ENCODE measurements at regions of chr5 and their contacts with region 1.

Region 1: GRCh38 chr5:116574367-116575325 is at the start of gene SEMA6A:
- DNase-seq: peak; percentile 92 to 93
- H3K4me3 ChIP-seq: peak within 1 kb of the TSS; percentile 61
- H3K4me3 Mint-ChIP-seq: peak within 1 kb of the TSS; percentile 92
- H3K27ac Mint-ChIP-seq: peak within 1 kb of the TSS; percentile 45
- H3K4me1 ChIP-seq: peaks cover 20% of the 10 kb centered on the region
- H3K4me1 Mint-ChIP-seq: peaks cover 21% of the 10 kb centered on the region
- H3K27me3 ChIP-seq: no peaks in the 10 kb centered on the region; the same call in 1 of the 2 replicates
- H3K27me3 Mint-ChIP-seq: peaks cover 2% of the 10 kb centered on the region
- CTCF ChIP-seq: no peak
- total RNA-seq, gene SEMA6A: 18.3 and 26.3 TPM in 2 replicates

Region 2: DNA sequence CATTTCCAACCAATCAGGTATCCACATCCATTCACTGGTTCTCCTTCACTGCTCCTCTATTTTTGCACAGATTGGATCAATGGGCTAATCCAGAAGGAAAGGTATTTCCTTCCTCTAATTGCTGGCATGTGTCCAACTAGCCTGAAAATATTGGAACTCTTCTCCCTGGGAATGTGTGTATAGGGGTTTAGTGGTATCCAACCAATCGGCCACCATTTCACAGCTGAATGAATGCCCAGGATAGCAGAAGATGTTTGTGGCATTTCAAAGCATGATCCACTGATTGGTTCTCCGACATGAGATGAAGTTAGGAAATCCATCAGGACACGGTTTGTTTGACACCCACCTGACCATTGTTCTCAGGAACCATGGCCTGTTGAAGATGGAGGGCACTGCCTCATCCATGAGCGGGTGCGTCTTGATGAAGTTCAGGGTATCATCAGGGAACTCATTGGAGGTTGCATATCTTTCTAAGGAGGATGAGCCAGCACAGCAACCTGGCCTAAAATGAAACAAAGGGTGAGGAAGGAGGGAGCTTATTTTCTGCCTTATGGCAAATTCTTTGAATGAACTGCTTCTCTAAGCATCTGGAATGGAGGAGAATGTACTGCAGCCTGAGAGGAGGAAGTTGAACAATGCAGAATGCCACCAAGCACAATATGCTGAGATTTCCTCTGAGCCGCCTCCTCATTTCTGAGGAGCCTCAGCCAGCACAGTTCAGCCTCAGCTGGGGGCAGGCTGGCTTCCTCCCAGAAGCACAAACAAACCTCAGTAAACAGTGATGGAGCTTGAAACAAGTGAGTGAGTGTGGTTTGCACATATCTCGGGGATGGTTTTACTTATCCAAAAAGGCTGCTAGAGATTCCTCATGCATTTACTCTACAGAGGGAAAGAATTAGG is 94.6 kb before region 1 on chr5:
- CTCF ChIA-PET with region 1: no interaction called
- POLR2A ChIA-PET with region 1: no interaction called
- intact Hi-C with region 1: no loop called
- DNase-seq: no peak
- H3K4me3 ChIP-seq: no peak overlapping the region
- H3K4me3 Mint-ChIP-seq: no peak overlapping the region
- H3K27ac Mint-ChIP-seq: no peak overlapping the region
- H3K4me1 ChIP-seq: no peaks in the 10 kb centered on the region
- H3K4me1 Mint-ChIP-seq: no peaks in the 10 kb centered on the region
- H3K27me3 ChIP-seq: no peaks in the 10 kb centered on the region
- H3K27me3 Mint-ChIP-seq: no peaks in the 10 kb centered on the region
- CTCF ChIP-seq: no peak

Region 3: DNA sequence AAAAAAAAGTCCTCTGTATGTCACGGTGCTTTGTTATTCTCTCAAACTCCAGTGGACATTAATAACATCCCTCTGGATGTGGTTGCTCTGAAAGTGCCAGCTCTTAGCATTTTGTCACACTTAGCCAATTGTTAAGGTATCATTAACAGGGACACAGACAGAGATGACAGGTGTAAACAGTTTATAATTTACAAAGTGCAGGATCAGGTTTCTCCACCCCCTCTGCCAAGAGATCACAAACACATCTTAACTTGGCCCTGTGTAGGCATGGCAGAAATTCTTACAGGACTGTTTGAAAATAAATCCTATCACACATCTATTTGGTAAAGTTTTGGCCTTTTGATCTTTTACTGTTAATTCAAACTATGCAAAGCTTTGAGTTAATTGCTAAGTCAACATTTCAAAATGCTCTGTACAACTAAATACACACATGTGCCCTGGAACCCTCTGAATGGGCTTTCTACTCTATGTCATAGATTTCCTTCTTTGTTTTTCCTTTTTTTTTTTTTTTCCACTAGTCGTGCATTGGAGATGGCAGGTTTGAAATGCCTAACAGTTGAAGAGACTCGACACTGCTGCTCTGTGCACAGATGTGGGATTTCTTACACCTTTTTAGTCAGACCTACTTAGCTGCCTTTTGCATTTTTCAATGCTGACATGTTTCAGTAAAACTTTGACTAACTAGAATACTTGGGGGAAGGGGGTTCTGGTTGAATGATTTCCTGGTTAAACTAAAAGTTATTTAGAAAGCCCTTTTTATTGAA is 41.7 kb before region 1 on chr5:
- CTCF ChIA-PET with region 1: no interaction called
- POLR2A ChIA-PET with region 1: no interaction called
- intact Hi-C with region 1: loop called (anchors 1 kb)
- DNase-seq: peak; percentile 61
- H3K4me3 ChIP-seq: no peak overlapping the region
- H3K4me3 Mint-ChIP-seq: no peak overlapping the region
- H3K27ac Mint-ChIP-seq: no peak overlapping the region
- H3K4me1 ChIP-seq: peaks cover 70% of the 10 kb centered on the region
- H3K4me1 Mint-ChIP-seq: peaks cover 28% of the 10 kb centered on the region
- H3K27me3 ChIP-seq: no peaks in the 10 kb centered on the region
- H3K27me3 Mint-ChIP-seq: no peaks in the 10 kb centered on the region
- CTCF ChIP-seq: no peak

Region 4: GRCh38 chr5:116658141-116658749 is 83.6 kb after region 1 on chr5:
- CTCF ChIA-PET with region 1: no interaction called
- POLR2A ChIA-PET with region 1: no interaction called
- intact Hi-C with region 1: loop called (anchors 5 kb)
- DNase-seq: no peak
- H3K4me3 ChIP-seq: no peak overlapping the region
- H3K4me3 Mint-ChIP-seq: no peak overlapping the region
- H3K27ac Mint-ChIP-seq: no peak overlapping the region
- H3K4me1 ChIP-seq: peaks cover 6% of the 10 kb centered on the region; the same call in 1 of the 2 replicates
- H3K4me1 Mint-ChIP-seq: peaks cover 7% of the 10 kb centered on the region
- H3K27me3 ChIP-seq: no peaks in the 10 kb centered on the region
- H3K27me3 Mint-ChIP-seq: no peaks in the 10 kb centered on the region
- CTCF ChIP-seq: no peak

Region 5: DNA sequence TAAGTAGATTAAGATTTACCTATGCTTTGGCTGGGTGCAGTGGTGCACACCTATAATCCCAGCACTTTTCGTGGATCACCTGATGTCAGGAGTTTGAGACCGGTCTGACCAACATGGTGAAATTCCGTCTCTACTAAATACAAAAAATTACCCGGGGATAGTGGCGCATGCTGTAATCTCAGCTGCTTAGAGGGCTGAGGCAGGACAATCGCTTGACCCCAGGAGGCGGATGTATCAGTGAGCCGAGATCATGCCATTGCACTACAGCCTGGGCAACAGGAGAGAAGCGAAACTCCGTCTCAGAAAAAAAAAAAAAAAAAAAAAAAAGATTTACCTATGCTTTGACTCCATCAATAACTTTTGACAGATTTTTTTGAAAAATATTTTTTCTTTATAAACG is 267.1 kb after region 1 on chr5:
- CTCF ChIA-PET with region 1: no interaction called
- POLR2A ChIA-PET with region 1: no interaction called
- intact Hi-C with region 1: loop called (anchors 2 kb)
- DNase-seq: no peak
- H3K4me3 ChIP-seq: no peak overlapping the region
- H3K4me3 Mint-ChIP-seq: no peak overlapping the region
- H3K27ac Mint-ChIP-seq: no peak overlapping the region
- H3K4me1 ChIP-seq: no peaks in the 10 kb centered on the region; the same call in 1 of the 2 replicates
- H3K4me1 Mint-ChIP-seq: peaks cover 13% of the 10 kb centered on the region
- H3K27me3 ChIP-seq: no peaks in the 10 kb centered on the region
- H3K27me3 Mint-ChIP-seq: no peaks in the 10 kb centered on the region
- CTCF ChIP-seq: no peak

Region 6: GRCh38 chr5:116947691-116948528 is 373.3 kb after region 1 on chr5:
- CTCF ChIA-PET with region 1: no interaction called
- POLR2A ChIA-PET with region 1: no interaction called
- intact Hi-C with region 1: loop called (anchors 1 kb)
- DNase-seq: peak; percentile 80 to 83
- H3K4me3 ChIP-seq: no peak overlapping the region
- H3K4me3 Mint-ChIP-seq: no peak overlapping the region
- H3K27ac Mint-ChIP-seq: no peak overlapping the region
- H3K4me1 ChIP-seq: no peaks in the 10 kb centered on the region
- H3K4me1 Mint-ChIP-seq: no peaks in the 10 kb centered on the region
- H3K27me3 ChIP-seq: no peaks in the 10 kb centered on the region
- H3K27me3 Mint-ChIP-seq: no peaks in the 10 kb centered on the region
- CTCF ChIP-seq: peak; percentile 79 to 86

Region 7: DNA sequence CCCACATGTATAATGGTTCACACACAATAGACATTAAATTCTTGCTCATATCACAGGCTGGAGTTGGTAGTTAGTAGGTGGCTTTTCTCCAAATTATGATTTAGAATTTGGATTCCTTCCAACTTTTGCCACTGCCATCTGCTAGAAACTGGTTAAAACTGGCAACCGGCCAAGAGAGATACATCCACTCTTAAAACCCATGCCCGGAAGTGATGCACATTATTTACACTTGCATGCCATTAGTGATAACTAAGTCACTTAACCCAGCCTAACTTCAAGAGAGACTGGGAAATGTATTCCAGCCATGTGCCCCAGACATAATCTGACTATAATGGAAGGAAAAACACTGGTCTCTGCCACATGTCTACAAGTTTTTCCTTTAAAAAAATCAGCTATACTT is 395.7 kb after region 1 on chr5:
- CTCF ChIA-PET with region 1: no interaction called
- POLR2A ChIA-PET with region 1: no interaction called
- intact Hi-C with region 1: no loop called
- DNase-seq: no peak
- H3K4me3 ChIP-seq: no peak overlapping the region
- H3K4me3 Mint-ChIP-seq: no peak overlapping the region
- H3K27ac Mint-ChIP-seq: no peak overlapping the region
- H3K4me1 ChIP-seq: no peaks in the 10 kb centered on the region
- H3K4me1 Mint-ChIP-seq: no peaks in the 10 kb centered on the region
- H3K27me3 ChIP-seq: no peaks in the 10 kb centered on the region
- H3K27me3 Mint-ChIP-seq: peaks cover 5% of the 10 kb centered on the region
- CTCF ChIP-seq: no peak

Measured in Caco-2 (cell line).